Gastrocnemius medialis (tissue), 4 donors: ENCODE measurements at regions of chr2 and their contacts with region 1.

Region 1: GRCh38 chr2:96665083-96665569 is 22.6 kb downstream of the FER1L5 start:
- DNase-seq: peak; percentile 54 to 77
- ATAC-seq: peak; percentile 99
- H3K4me3 ChIP-seq: no peak overlapping the region
- H3K27ac ChIP-seq: peak overlapping the region; percentile 83 to 88 (median 85)
- H3K4me1 ChIP-seq: peaks cover 10 to 15% of the 10 kb centered on the region in 2 donors
- H3K27me3 ChIP-seq: no peaks in the 10 kb centered on the region
- CTCF ChIP-seq: no peak
- POLR2A ChIP-seq: no peak

Region 2: GRCh38 chr2:96498023-96498431 is 167.1 kb before region 1 on chr2:
- in situ Hi-C with region 1: no loop called
- intact Hi-C with region 1: no loop called
- DNase-seq: no peak
- ATAC-seq: no peak
- H3K4me3 ChIP-seq: no peak overlapping the region
- H3K27ac ChIP-seq: no peak overlapping the region
- H3K4me1 ChIP-seq: no peaks in the 10 kb centered on the region
- H3K27me3 ChIP-seq: peaks cover 15 to 20% (median 20%) of the 10 kb centered on the region in 3 donors
- CTCF ChIP-seq: no peak
- POLR2A ChIP-seq: no peak

Region 3: DNA sequence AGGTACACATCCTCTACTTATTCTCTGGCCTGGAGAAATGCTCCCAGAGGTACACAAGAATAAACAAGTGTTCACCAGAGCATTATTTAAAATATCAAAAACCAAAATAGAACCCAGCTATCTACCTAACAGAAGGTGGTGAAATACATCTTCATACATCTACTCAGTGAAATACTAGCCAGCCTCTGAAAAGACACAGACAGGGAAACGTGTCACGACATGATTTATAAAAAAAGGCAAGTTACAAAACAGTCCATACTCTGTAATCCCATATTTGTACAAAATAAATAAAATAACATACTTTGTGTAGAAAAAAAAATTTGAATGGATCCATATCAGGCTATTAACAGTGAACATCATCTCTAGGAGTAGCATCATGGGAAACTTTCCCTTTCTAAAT is 65.2 kb before region 1 on chr2:
- in situ Hi-C with region 1: no loop called
- intact Hi-C with region 1: loop called (anchors 2 kb)
- DNase-seq: no peak
- ATAC-seq: no peak
- H3K4me3 ChIP-seq: no peak overlapping the region
- H3K27ac ChIP-seq: peak overlapping the region; percentile 80 to 93 (median 90)
- H3K4me1 ChIP-seq: peaks cover 47 to 64% of the 10 kb centered on the region in 2 donors
- H3K27me3 ChIP-seq: no peaks in the 10 kb centered on the region
- CTCF ChIP-seq: no peak
- POLR2A ChIP-seq: no peak